ENCODE measurements at regions of chr2 and their contacts with region 1.

Region 1: GRCh38 chr2:177148477-177149154 is 64.0 kb upstream of the HNRNPA3 start:
- DNase-seq: peak; percentile 58 to 89 (median 70)
- ATAC-seq: peak; percentile 99
- H3K4me3 ChIP-seq: peak overlapping the region; percentile 27
- H3K27ac ChIP-seq: no peak overlapping the region
- H3K4me1 ChIP-seq: peaks cover 0 to 6% of the 10 kb centered on the region in 2 experiments; a peak in 2 of 5 replicates
- H3K27me3 ChIP-seq: peaks cover 8 to 10% of the 10 kb centered on the region in 2 experiments
- CTCF ChIP-seq: peak; percentile 90 to 97 (median 93)
- EP300 ChIP-seq: no peak
- POLR2A ChIP-seq: no peak
- RAD21 ChIP-seq: peak; percentile 67 to 85

Region 2: DNA sequence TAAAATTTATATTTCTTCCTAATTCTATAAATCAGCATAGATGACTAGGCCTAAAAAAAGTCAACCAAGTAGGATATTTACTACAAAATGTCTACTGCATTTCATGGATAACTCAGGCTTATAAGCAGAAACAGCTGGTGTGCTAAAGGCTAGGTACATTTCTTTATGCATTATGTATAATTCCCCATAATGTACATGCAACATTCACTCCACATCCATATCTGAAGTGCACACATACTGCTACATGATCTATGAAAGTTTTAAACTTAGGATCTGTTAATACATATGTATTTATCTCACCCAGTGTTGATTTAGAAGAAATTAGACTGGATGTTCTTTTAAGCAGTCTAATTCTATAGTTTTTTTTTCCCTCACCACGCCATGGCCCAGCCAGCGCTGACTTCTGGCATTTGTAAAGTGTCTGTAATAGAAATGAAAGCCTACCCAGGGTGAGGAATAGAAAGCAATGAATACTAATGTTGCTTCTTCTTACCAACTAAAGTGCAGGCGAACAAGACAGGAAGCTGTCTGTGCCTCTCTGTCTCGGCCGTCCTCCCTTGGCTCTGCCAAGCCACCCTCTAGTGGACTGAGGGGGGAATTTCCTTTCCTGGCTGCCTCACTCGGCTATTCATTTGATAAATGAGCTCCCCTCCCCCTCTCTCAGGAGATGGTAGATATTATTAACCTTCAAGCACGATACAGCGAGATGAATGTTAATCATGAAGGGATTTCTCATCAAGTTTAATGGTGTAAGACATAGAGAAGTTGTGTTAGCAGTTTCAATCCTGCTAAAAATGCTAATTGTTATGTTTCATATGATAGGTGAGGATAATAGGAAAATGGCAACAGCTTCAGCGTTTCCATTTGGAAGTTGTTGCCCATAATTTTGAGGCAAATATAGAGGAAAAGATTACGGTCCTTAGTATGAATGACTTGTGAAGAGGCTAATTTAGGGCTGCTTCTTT is 494.9 kb before region 1 on chr2:
- CTCF ChIA-PET with region 1: interaction called, 4 read pairs
- POLR2A ChIA-PET with region 1: interaction called, 3 read pairs
- in situ Hi-C with region 1: no loop called
- intact Hi-C with region 1: loop called (anchors 5 kb)
- DNase-seq: peak; percentile 29 to 58 (median 50)
- ATAC-seq: peak; percentile 95
- H3K4me3 ChIP-seq: no peak overlapping the region
- H3K27ac ChIP-seq: no peak overlapping the region
- H3K4me1 ChIP-seq: no peaks in the 10 kb centered on the region
- H3K27me3 ChIP-seq: no peaks in the 10 kb centered on the region; a peak in 2 of 5 replicates
- CTCF ChIP-seq: peak; percentile 64 to 77 (median 66)
- EP300 ChIP-seq: no peak
- POLR2A ChIP-seq: no peak
- RAD21 ChIP-seq: peak; percentile 26 to 42; a peak in 2 of 4 replicates

Region 3: GRCh38 chr2:176814306-176815052 is 334.1 kb before region 1 on chr2:
- CTCF ChIA-PET with region 1: no interaction called
- POLR2A ChIA-PET with region 1: no interaction called
- in situ Hi-C with region 1: no loop called
- intact Hi-C with region 1: loop called (anchors 5 kb)
- DNase-seq: peak; percentile 34 to 48 (median 44)
- ATAC-seq: peak; percentile 66; the same call in 2 of the 3 replicates
- H3K4me3 ChIP-seq: no peak overlapping the region
- H3K27ac ChIP-seq: no peak overlapping the region
- H3K4me1 ChIP-seq: no peaks in the 10 kb centered on the region
- H3K27me3 ChIP-seq: peaks cover under 1 to 11% of the 10 kb centered on the region in 2 experiments; a peak in 3 of 5 replicates
- CTCF ChIP-seq: peak; percentile 49 to 82 (median 62); a peak in 4 of 6 replicates
- EP300 ChIP-seq: no peak
- POLR2A ChIP-seq: no peak
- RAD21 ChIP-seq: peak; percentile 71 to 78

Region 4: GRCh38 chr2:176902454-176902853 is 246.2 kb before region 1 on chr2:
- CTCF ChIA-PET with region 1: no interaction called
- POLR2A ChIA-PET with region 1: no interaction called
- in situ Hi-C with region 1: no loop called
- intact Hi-C with region 1: loop called (anchors 10 kb)
- DNase-seq: no peak
- ATAC-seq: no peak
- H3K4me3 ChIP-seq: no peak overlapping the region
- H3K27ac ChIP-seq: no peak overlapping the region
- H3K4me1 ChIP-seq: no peaks in the 10 kb centered on the region
- H3K27me3 ChIP-seq: no peaks in the 10 kb centered on the region; a peak in 1 of 5 replicates
- CTCF ChIP-seq: no peak
- EP300 ChIP-seq: no peak
- POLR2A ChIP-seq: no peak
- RAD21 ChIP-seq: no peak

Region 5: DNA sequence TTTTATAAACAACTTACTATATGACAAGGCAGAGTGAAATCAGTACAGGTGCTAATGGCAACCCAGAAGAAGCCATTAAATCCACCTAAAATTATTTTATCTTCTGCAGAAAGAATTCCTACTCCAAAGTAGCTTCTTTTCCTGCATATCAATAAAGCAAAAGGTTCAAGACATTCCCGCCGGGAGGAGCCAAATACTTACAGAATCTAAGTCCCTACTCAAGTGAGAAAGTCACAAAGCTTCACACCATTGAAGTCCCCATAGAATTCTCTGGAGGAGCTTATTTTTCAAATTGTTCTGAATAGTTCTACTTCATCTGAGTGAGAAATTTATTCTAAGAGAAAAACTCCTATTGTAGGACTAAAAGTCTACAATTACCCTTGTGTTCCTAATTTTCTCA is 169.7 kb before region 1 on chr2:
- CTCF ChIA-PET with region 1: interaction called, 4 read pairs
- POLR2A ChIA-PET with region 1: no interaction called
- in situ Hi-C with region 1: no loop called
- intact Hi-C with region 1: loop called (anchors 1 kb)
- DNase-seq: no peak
- ATAC-seq: no peak
- H3K4me3 ChIP-seq: no peak overlapping the region
- H3K27ac ChIP-seq: no peak overlapping the region
- H3K4me1 ChIP-seq: no peaks in the 10 kb centered on the region
- H3K27me3 ChIP-seq: 0 out of 5 replicates have a peak, but pooled peaks cover 0 to 4% of the 10 kb centered on the region in 2 experiments
- CTCF ChIP-seq: peak in 1 of 3 experiments; percentile 33; a peak in 1 of 6 replicates
- EP300 ChIP-seq: no peak
- POLR2A ChIP-seq: no peak
- RAD21 ChIP-seq: peak; percentile 20 to 24; a peak in 1 of 4 replicates

Region 6: DNA sequence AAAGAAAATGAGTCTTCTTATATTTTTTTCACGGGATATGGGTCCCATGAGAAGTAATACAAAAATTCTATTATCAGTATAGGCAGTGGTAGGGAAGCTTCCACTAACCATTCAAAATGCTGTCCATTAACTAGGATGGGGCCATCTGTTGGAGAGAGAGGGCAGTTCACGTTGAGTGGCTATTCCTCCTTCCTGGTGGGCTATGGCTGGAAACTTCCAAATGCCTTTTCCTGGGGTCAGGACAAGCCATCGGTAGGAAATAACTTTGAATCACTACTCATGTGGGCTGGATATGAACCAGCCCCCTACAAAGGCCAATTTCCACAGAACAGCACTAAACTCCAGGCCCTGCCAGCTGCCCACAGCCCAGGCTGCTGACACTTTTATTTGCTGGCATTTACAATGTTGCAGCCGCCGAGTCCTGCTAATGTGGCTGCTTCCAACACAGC is 92.1 kb before region 1 on chr2:
- CTCF ChIA-PET with region 1: no interaction called
- POLR2A ChIA-PET with region 1: no interaction called
- in situ Hi-C with region 1: no loop called
- intact Hi-C with region 1: no loop called
- DNase-seq: peak in 3 of 4 experiments; percentile 11 to 20 (median 14)
- ATAC-seq: peak; percentile 91
- H3K4me3 ChIP-seq: no peak overlapping the region
- H3K27ac ChIP-seq: no peak overlapping the region
- H3K4me1 ChIP-seq: no peaks in the 10 kb centered on the region
- H3K27me3 ChIP-seq: peaks cover 7 to 18% of the 10 kb centered on the region in 2 experiments; a peak in 3 of 5 replicates
- CTCF ChIP-seq: peak; percentile 29 to 53 (median 50); a peak in 3 of 6 replicates
- EP300 ChIP-seq: no peak
- POLR2A ChIP-seq: no peak
- RAD21 ChIP-seq: peak in 1 of 2 experiments; percentile 47; a peak in 3 of 4 replicates

Region 7: GRCh38 chr2:177078416-177078815 is 70.2 kb before region 1 on chr2:
- CTCF ChIA-PET with region 1: no interaction called
- POLR2A ChIA-PET with region 1: no interaction called
- in situ Hi-C with region 1: no loop called
- intact Hi-C with region 1: loop called (anchors 5 kb)
- DNase-seq: no peak
- ATAC-seq: no peak
- H3K4me3 ChIP-seq: no peak overlapping the region
- H3K27ac ChIP-seq: no peak overlapping the region
- H3K4me1 ChIP-seq: no peaks in the 10 kb centered on the region
- H3K27me3 ChIP-seq: no peaks in the 10 kb centered on the region; a peak in 1 of 5 replicates
- CTCF ChIP-seq: no peak
- EP300 ChIP-seq: no peak
- POLR2A ChIP-seq: no peak
- RAD21 ChIP-seq: no peak

Region 8: DNA sequence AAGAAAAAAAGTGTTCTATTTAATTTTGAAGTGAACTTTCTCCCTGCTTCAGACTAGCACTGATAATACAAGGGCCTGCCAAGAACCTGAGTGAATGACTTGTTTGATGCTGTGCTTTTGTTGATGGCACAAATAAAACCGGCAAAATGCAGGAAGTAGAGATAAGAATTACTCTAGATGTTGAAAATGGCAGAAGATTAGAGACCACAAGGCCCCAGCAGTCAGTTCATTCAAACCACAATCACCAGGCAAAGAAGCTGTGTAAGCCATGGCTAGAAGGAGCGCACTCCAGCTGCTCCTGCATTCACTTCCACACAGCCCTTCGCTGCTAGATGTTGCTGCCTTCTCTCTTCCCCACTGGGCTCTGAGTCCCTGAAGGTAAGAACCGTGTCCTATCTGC is 541.0 kb after region 1 on chr2:
- CTCF ChIA-PET with region 1: no interaction called
- POLR2A ChIA-PET with region 1: no interaction called
- in situ Hi-C with region 1: no loop called
- intact Hi-C with region 1: no loop called
- DNase-seq: peak in 2 of 4 experiments; percentile 22 to 42
- ATAC-seq: peak; percentile 61
- H3K4me3 ChIP-seq: no peak overlapping the region
- H3K27ac ChIP-seq: no peak overlapping the region
- H3K4me1 ChIP-seq: peaks cover 7 to 27% of the 10 kb centered on the region in 2 experiments; a peak in 4 of 5 replicates
- H3K27me3 ChIP-seq: no peaks in the 10 kb centered on the region
- CTCF ChIP-seq: no peak
- EP300 ChIP-seq: peak; percentile 24; the same call in 1 of the 2 replicates
- POLR2A ChIP-seq: no peak
- RAD21 ChIP-seq: no peak

Region 9: DNA sequence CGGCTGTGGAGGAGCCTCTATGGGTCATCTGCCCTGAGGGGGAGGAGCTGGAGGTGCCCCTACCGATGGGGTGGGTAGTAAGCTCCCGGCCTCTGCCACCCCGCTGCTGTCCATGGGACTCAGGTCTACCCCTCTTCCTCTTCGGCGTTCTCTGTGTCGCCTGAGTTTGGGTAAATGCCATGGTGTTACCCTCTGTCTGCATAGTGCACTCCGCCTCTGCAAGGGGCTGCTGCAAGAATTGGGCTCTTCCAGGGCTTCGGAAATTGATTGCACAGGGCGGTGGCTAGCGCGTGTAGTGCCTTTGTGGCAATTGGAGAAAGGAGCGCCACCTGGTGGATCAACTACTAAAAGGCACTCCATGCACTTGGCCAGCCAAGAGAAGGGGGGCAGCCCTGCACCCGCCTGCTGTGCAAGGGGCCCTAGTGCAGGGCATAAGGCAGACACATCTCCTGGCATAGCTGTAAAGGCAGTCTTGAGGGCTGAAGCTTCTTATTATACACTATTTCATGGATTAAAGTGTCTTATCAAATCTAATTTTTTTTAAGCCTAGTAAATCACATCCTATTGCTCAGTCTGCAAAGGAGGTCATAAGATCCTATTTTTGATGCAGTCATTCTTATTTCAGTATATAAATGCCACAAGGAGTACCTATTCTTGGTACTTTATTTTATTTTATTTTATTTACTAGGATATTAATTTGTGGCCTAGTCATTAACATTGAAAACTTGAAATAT is 615.1 kb after region 1 on chr2:
- CTCF ChIA-PET with region 1: interaction called, 3 read pairs
- POLR2A ChIA-PET with region 1: no interaction called
- in situ Hi-C with region 1: no loop called
- intact Hi-C with region 1: loop called (anchors 5 kb)
- DNase-seq: peak; percentile 74 to 90 (median 85)
- ATAC-seq: peak; percentile 98
- H3K4me3 ChIP-seq: no peak overlapping the region
- H3K27ac ChIP-seq: no peak overlapping the region
- H3K4me1 ChIP-seq: peaks cover 4 to 16% of the 10 kb centered on the region in 2 experiments; a peak in 4 of 5 replicates
- H3K27me3 ChIP-seq: no peaks in the 10 kb centered on the region
- CTCF ChIP-seq: peak; percentile 91 to 96 (median 92)
- EP300 ChIP-seq: no peak
- POLR2A ChIP-seq: no peak
- RAD21 ChIP-seq: peak; percentile 69 to 77

Measured in K562 (cell line).